GM10248 (cell line): ENCODE measurements at regions of chr4 and their contacts with region 1.

Region 1: DNA sequence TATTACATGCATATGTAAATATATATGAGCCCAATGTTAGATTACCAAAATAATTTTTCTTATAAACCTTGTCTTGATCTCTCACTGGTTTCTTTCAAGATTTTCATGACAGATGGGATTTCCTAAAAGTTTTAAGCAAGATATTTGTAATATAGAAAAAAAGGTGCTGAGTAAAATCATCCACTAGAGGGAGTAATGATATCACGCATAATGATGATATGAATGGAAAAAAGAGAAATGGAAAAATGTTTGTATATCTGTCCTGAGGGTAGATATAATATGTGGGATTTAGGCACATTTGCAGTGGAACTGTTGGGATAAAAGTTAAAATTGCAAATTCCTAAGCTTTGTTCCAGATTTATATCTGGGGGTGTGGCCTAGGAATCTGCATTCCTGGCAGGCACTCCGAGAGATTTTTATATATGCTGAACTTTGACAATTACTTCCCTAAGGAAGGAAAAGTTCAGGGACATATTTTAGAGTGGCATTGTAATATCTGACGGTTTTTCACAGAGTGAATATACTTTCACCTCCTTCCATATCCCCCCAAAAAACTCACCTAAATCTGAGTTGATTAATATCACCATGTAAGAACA is 60.5 kb downstream of the TMA16 start:
- DNase-seq: no peak
- CTCF ChIP-seq: peak; percentile 51

Region 2: GRCh38 chr4:163568843-163569242 is 13.9 kb after region 1 on chr4:
- CTCF ChIA-PET with region 1: interaction called, 57 read pairs
- POLR2A ChIA-PET with region 1: no interaction called
- DNase-seq: no peak
- CTCF ChIP-seq: no peak

Region 3: DNA sequence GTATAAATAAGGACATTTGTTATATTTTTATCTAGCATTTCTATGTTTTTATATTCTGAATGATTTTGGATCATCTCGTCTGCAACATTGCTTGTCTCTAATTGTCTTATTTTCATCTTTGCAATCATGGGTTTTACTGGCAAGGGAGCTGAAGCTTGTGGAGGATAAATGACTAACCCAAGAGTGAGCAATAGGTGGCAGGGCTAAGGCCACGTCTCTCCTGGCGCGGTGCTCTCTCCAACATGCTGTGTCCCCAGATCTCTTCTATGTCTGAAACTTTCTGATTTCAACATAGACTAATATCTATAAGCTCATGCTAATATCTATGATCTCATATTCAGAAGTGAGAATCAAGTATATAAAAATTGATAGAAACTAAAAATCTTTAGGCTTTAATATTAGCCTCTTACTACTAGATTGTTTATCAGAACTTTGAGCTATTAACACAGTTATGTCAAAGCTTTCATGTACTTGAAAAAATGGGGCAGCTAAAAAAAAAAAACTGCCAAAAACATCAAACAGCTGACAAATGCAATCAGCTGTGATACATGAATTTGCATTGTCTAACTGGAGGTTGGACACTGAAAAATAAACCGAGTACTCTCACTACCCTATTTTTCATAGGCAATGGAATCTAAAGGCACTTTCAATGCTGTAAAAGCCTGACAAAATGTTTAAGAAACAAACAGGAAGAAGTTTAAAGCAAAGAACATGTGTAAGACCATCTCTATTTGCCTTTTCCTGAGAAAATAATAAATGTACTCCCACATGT is 108.7 kb after region 1 on chr4:
- CTCF ChIA-PET with region 1: interaction called, 12 read pairs
- POLR2A ChIA-PET with region 1: no interaction called
- DNase-seq: peak; percentile 26
- CTCF ChIP-seq: no peak

Region 4: DNA sequence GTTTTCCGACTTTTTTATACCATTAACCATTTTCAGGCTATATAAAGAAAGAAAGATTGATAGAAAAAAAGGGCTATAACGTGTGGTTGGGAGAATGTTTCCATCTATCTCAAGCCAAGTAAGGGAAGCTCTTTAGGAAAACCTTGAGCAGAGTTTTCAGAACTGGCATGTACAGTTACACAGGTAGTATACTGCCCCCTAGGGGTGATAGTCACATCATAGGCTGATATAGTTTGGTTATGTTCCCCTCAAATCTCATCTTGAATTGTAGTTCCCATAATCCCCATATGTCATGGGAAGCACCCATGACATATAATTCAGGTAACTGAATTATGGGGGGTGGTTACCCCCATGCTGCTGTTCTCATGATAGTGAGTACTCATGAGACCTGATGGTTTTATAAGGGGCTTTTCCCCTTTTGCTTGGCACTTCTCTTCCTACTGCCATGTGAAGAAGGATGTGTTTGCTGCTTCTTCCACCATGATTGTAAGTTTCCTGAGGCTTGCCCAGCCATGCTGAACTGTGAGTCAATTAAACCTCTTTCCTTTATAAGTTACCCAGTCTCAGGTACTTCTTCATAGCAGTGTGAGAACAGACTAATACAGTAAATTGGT is 126.3 kb after region 1 on chr4:
- CTCF ChIA-PET with region 1: interaction called, 87 read pairs
- POLR2A ChIA-PET with region 1: no interaction called
- DNase-seq: peak; percentile 56
- CTCF ChIP-seq: peak; percentile 59

Region 5: DNA sequence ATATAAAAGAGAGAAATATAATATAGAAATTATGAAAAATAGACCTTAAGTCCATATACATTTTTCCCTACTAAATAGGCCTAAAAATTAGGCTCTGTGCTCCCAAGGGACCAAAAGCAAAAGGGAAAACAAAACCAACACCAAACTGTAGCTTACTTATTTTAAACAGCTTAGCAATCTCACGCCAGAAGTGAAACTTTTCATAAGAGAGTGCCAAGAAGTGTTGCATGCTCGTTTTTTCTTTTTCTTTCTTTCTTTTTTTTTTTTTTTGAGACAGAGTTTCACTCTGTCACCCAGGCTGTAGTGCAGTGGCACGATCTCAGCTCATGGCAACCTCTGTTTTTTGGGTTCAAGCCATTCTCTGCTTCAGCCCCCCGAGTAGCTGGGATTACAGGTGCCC is 189.9 kb after region 1 on chr4:
- CTCF ChIA-PET with region 1: interaction called, 13 read pairs
- POLR2A ChIA-PET with region 1: no interaction called
- DNase-seq: peak; percentile 73
- CTCF ChIP-seq: no peak

Region 6: DNA sequence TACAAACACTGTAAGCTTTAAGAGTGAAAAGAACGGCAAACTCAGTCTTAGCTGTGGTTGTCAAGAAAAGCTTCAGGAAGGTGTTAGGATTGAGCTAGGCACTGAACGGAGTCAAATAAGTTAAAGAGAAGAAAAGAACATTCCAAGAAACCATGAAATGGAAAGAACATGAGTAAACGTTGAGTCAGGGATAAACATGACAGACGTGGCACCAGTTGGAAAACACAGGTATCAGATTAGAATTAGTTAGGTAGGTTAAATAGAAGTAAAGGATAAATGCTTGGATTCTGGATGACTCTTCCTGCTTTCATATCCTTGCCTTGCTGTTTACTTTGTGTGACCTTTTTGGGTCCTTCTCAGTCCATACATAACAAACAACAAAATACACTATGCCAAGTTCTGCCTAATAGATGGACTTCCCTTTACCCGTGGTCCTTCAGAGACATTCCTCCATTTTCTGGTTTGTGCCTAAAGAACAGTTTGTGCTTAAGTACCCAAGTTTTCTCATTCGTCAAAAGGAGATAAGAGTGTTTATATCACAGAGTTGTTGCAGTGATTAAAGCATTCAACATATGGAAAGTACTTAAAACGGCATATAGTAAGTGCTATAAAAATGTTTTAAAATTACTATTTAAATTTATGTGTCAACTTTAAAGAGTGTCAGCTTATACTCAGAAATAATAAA is 386.4 kb after region 1 on chr4:
- CTCF ChIA-PET with region 1: no interaction called
- POLR2A ChIA-PET with region 1: no interaction called
- DNase-seq: no peak
- CTCF ChIP-seq: no peak

Region 7: GRCh38 chr4:164012396-164013027 is 457.5 kb after region 1 on chr4:
- CTCF ChIA-PET with region 1: interaction called, 18 read pairs
- POLR2A ChIA-PET with region 1: no interaction called
- DNase-seq: peak; percentile 6
- CTCF ChIP-seq: peak; percentile 39

Region 8: DNA sequence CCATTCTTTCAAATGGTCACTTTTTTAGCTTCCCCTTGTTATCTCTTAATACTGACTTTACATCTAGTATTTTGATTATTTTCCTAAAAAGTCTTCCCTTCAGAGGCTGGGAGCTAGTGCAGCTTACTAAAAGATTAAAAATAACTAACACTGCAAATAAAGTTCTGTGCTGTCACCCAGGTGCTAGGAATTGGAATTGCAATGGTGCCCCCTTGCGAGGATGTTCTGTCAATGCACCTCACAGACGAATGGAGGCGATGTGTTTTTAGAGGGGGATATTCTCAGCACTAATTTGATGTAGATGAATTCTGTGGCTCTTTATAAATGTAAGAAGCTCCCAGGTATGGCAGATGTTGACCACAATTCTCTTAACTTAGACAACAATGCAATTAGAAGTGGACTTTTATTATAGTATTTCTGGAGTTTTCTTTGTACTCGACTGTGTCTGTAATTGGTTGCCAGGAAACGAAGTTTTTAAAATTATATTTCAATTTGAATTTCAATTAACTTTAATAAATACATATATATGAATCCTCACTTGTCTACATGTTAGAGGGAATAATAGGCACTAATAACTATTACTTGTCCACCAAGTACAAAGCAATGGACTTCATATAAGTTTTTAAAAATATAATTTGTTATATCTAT is 1177.0 kb after region 1 on chr4:
- CTCF ChIA-PET with region 1: interaction called, 37 read pairs
- POLR2A ChIA-PET with region 1: no interaction called
- DNase-seq: peak; percentile 50
- CTCF ChIP-seq: peak; percentile 89